ENCODE measurements at regions of chr6 and their contacts with region 1.

Region 1: DNA sequence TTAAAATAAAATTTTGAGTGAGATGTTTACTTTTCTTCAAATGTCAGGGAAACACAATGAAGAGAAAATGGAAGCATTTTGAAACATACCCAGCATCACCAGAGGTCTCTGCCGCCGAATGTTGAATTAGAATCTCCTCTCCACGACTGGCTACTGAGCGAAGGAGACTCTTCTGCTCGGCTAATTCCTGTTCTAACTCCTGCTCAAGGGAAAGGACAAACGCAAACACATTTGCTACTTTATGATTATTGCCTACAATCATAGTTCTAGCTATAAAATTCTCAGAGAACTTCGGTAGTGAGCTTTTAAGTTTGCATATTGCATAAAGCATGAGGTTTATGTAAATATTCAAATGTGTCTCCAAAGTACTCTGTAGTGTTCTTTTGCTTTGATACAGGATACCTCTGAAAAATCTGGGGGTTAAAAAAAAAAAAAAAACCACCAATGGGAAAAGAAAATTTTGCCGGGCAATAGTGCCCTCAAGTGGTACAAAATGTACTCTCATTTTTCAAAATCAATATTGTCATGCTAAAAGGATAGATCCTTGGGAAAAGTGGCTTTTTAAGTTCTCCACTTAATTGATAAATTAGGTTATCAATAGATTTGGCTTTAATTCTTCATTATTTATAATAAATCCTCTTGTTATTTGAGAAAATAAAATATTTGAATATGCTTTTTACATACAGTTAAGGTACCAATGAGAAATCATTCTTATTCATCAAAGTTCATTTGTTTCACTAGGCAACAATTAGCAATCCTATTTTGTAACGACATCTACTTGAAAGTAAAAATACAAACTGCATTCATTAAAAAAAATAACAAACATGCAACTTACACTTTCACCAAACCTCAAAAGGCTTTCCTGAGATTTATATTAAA is 369.0 kb downstream of the SYNE1 start:
- DNase-seq: peak in 1 of 2 experiments; percentile 51
- H3K4me3 ChIP-seq: no peak overlapping the region
- H3K4me3 Mint-ChIP-seq: no peak overlapping the region
- H3K27ac Mint-ChIP-seq: no peak overlapping the region
- H3K4me1 ChIP-seq: peaks cover 21% of the 10 kb centered on the region
- H3K4me1 Mint-ChIP-seq: peaks cover 14% of the 10 kb centered on the region
- H3K27me3 ChIP-seq: no peaks in the 10 kb centered on the region
- H3K27me3 Mint-ChIP-seq: no peaks in the 10 kb centered on the region
- CTCF ChIP-seq: peak; percentile 52 to 68

Region 2: DNA sequence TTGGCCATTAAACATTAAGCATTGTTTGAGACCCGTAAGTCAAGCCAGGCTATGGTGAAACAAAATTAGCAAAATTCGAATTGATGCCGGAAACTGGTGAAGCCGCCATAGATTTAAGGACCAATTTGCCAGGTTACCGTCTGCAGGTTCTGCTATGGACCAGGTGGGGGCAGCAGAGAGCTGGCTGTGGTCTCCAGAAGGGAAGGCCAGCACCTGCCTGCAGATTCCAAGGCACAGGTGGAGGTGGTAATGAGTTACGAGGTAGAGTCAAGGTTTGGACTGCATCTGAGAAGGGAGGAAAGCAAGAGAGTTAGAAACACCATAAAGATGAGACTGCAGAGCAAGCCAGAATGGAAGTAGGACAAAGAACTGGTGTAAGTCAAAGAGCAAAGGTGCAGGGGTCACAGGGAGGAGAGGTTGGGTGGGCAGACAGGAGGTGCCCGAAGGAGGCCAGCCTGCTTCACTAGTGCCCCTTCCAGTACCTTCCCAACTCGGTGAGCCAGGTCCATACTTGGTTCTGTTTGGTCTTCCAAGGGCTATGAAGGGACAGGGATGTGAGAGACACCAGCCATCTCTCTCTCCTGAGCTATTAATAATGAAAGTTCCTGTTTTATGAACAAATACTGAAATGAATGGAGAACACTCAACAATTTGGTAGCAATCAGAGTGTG is 592.3 kb before region 1 on chr6:
- CTCF ChIA-PET with region 1: no interaction called
- POLR2A ChIA-PET with region 1: no interaction called
- intact Hi-C with region 1: loop called (anchors 1 kb)
- DNase-seq: peak; percentile 56 to 69
- H3K4me3 ChIP-seq: no peak overlapping the region
- H3K4me3 Mint-ChIP-seq: no peak overlapping the region
- H3K27ac Mint-ChIP-seq: peak overlapping the region; percentile 5
- H3K4me1 ChIP-seq: no peaks in the 10 kb centered on the region; the same call in 1 of the 2 replicates
- H3K4me1 Mint-ChIP-seq: peaks cover 14% of the 10 kb centered on the region
- H3K27me3 ChIP-seq: no peaks in the 10 kb centered on the region
- H3K27me3 Mint-ChIP-seq: no peaks in the 10 kb centered on the region
- CTCF ChIP-seq: peak; percentile 85 to 91

Region 3: GRCh38 chr6:152070556-152070955 is 197.7 kb before region 1 on chr6:
- CTCF ChIA-PET with region 1: no interaction called
- POLR2A ChIA-PET with region 1: no interaction called
- intact Hi-C with region 1: loop called (anchors 1 kb)
- DNase-seq: peak in 1 of 2 experiments; percentile 35
- H3K4me3 ChIP-seq: no peak overlapping the region
- H3K4me3 Mint-ChIP-seq: no peak overlapping the region
- H3K27ac Mint-ChIP-seq: no peak overlapping the region
- H3K4me1 ChIP-seq: no peaks in the 10 kb centered on the region
- H3K4me1 Mint-ChIP-seq: no peaks in the 10 kb centered on the region
- H3K27me3 ChIP-seq: no peaks in the 10 kb centered on the region
- H3K27me3 Mint-ChIP-seq: peaks cover 10% of the 10 kb centered on the region
- CTCF ChIP-seq: peak; percentile 9 to 33

Region 4: GRCh38 chr6:152184917-152185574 is 83.2 kb before region 1 on chr6:
- CTCF ChIA-PET with region 1: no interaction called
- POLR2A ChIA-PET with region 1: no interaction called
- intact Hi-C with region 1: no loop called
- DNase-seq: no peak
- H3K4me3 ChIP-seq: no peak overlapping the region
- H3K4me3 Mint-ChIP-seq: no peak overlapping the region
- H3K27ac Mint-ChIP-seq: no peak overlapping the region
- H3K4me1 ChIP-seq: no peaks in the 10 kb centered on the region
- H3K4me1 Mint-ChIP-seq: no peaks in the 10 kb centered on the region
- H3K27me3 ChIP-seq: no peaks in the 10 kb centered on the region
- H3K27me3 Mint-ChIP-seq: no peaks in the 10 kb centered on the region
- CTCF ChIP-seq: no peak

Region 5: DNA sequence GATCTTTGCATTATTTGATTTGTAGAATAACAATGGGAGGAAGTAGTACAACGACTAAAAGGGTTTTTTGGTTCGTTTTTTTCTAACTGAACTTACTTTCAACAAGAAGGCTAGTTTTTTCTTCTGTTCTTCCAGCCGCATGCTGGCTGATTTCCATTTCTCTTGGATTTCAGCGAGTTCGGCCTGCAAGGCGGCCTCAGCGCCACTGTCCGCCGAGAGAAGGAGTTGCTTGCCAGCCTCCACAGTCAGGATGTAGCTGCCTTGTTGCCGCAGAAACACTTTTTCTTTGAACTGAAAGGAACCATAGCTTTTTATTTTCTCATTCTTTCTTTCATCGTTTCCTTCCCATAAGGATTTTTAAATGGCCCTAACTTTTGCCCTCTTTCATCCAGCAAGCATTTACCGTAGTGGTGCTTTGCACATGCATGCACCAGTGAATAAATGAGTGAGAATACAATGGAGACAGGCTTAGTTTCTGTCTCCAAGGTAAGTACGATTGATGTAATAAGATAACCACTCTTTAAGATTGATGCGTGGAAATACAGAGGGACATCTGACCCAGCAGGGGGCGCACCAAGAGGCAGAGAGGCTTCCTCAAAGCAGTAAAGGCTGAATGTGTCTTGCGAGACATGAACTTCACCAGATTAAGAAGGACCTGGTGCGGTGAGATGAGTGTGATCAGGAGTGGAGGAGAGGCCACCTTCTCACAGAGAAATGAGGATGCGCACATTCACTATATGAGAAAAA is 62.0 kb before region 1 on chr6:
- CTCF ChIA-PET with region 1: no interaction called
- POLR2A ChIA-PET with region 1: no interaction called
- intact Hi-C with region 1: loop called (anchors 1 kb)
- DNase-seq: peak in 1 of 2 experiments; percentile 32
- H3K4me3 ChIP-seq: no peak overlapping the region
- H3K4me3 Mint-ChIP-seq: no peak overlapping the region
- H3K27ac Mint-ChIP-seq: no peak overlapping the region
- H3K4me1 ChIP-seq: no peaks in the 10 kb centered on the region; the same call in 1 of the 2 replicates
- H3K4me1 Mint-ChIP-seq: peaks cover 6% of the 10 kb centered on the region
- H3K27me3 ChIP-seq: no peaks in the 10 kb centered on the region
- H3K27me3 Mint-ChIP-seq: no peaks in the 10 kb centered on the region
- CTCF ChIP-seq: peak; percentile 32 to 38

Region 6: DNA sequence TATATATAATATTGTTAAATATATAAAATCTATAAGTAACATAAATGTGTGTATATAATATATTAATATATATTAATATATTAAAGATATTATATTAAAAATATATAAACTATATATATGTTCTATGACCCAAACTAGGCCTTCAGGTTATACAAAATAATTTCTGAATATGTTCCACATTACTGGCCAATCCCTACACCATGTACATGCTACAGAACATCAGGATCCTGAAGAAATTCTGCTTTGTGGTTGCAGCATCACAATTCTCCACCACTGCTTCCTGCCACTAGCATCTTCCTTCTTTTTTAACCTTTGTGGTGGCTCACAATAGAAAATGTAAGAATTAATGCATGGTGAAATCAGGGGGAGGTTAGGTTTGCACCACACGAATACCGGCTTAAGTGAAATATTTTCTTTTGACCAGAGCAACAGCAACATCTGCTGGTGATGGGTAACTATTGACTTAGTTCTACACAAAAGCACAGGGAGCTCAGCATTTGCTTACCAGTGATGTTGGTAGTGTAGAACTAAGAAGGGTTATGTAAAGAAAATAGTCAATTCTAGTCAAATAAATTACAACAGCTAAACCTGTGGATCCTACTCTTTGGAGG is 88.3 kb after region 1 on chr6:
- CTCF ChIA-PET with region 1: interaction called, 4 read pairs
- POLR2A ChIA-PET with region 1: no interaction called
- intact Hi-C with region 1: loop called (anchors 1 kb)
- DNase-seq: peak in 1 of 2 experiments; percentile 55
- H3K4me3 ChIP-seq: no peak overlapping the region
- H3K4me3 Mint-ChIP-seq: no peak overlapping the region
- H3K27ac Mint-ChIP-seq: no peak overlapping the region
- H3K4me1 ChIP-seq: peaks cover 4% of the 10 kb centered on the region; the same call in 1 of the 2 replicates
- H3K4me1 Mint-ChIP-seq: peaks cover 7% of the 10 kb centered on the region
- H3K27me3 ChIP-seq: no peaks in the 10 kb centered on the region
- H3K27me3 Mint-ChIP-seq: no peaks in the 10 kb centered on the region
- CTCF ChIP-seq: peak; percentile 54 to 57

Measured in Caco-2 (cell line).